Activated CD4-positive, alpha-beta memory T cell treated with anti-CD3 and anti-CD28 coated beads, Interleukin-2, amount 10 ng/mL, durations not matched to agents 7 days and 5 days (primary cell): ENCODE measurements at regions of chr18 and their contacts with region 1.

Region 1: GRCh38 chr18:51197661-51198424 is at the start of gene MEX3C:
- DNase-seq: peak; percentile 99
- H3K4me3 Mint-ChIP-seq: peak within 1 kb of the TSS; percentile 89
- H3K27ac Mint-ChIP-seq: peak within 1 kb of the TSS; percentile 97
- H3K4me1 Mint-ChIP-seq: peaks cover 26% of the 10 kb centered on the region
- H3K27me3 Mint-ChIP-seq: no peaks in the 10 kb centered on the region
- total RNA-seq, gene MEX3C: 55.4 to 62.6 TPM

Region 2: DNA sequence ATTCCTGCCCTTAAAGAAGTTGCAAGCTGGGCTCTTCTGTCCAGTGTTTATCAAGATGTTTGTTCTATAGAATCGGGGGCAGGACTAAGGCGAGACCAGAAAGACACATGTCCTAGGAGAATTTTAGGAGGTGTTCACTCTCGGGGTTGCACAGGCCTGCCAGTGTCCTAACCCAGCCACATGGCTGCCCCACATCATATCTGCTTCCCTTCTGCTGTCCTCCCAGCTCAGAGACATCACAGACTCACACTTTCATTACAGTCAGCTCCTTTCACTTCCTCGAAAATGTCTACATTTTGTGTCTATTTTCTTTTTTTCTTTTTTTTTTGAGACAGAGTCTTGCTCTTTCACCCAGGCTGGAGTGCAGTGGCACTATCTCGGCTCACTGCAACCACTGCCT is 367.3 kb before region 1 on chr18:
- CTCF ChIA-PET with region 1: no interaction called
- POLR2A ChIA-PET with region 1: no interaction called
- DNase-seq: no peak
- H3K4me3 Mint-ChIP-seq: no peak overlapping the region
- H3K27ac Mint-ChIP-seq: no peak overlapping the region
- H3K4me1 Mint-ChIP-seq: no peaks in the 10 kb centered on the region
- H3K27me3 Mint-ChIP-seq: peaks cover 3% of the 10 kb centered on the region

Region 3: DNA sequence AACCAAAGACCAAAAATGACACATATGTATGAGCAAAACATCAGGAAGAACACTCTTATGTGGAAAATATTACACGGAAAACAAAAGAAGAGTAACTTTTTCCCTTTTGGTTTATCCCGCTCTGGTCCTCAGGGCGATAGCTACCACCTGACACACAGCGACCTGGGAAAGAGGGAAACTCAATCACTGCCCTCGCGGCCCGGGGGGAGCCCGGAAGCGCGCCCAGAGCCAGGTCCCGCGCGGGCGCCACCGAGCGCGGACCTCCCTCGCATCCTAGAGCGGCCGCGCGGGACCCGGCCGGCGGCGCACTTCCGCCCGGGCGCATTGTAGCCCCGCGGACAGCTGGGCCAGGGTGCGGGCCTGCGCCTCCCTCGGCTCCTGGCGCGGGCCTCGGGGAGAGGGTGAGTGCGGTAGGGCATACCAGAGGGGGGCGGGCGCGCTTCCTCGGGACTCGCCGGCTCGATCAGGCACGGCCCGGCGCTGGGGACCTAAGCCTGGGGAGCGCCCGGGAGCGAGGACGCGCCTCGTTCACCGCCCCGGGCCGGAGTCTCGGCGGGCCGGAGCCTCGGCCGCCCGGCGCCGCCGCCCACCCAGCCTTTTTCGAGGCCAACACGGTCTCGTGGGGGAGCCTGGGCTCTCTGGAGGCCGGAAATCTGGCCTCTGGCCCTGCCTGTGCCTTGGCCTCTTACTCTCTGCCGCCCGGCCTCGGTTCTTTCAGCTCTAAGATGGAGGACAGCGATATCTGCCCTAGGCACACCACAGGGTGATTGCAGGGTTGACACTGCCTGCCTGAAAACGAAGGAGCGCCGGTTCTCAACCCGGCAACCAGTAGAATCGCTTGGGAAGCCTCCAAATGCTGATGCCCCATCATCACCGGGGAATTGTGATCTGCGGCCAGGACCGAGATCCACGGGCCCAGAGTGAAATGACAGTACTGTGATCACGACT is 229.9 kb before region 1 on chr18 and contains the start of gene ELAC1:
- CTCF ChIA-PET with region 1: no interaction called
- POLR2A ChIA-PET with region 1: interaction called, 14 read pairs
- DNase-seq: peak; percentile 67
- H3K4me3 Mint-ChIP-seq: peak within 1 kb of the TSS; percentile 97
- H3K27ac Mint-ChIP-seq: peak within 1 kb of the TSS; percentile 80
- H3K4me1 Mint-ChIP-seq: peaks cover 28% of the 10 kb centered on the region
- H3K27me3 Mint-ChIP-seq: no peaks in the 10 kb centered on the region
- total RNA-seq, gene ELAC1: 5.9 to 7.3 TPM

Region 4: DNA sequence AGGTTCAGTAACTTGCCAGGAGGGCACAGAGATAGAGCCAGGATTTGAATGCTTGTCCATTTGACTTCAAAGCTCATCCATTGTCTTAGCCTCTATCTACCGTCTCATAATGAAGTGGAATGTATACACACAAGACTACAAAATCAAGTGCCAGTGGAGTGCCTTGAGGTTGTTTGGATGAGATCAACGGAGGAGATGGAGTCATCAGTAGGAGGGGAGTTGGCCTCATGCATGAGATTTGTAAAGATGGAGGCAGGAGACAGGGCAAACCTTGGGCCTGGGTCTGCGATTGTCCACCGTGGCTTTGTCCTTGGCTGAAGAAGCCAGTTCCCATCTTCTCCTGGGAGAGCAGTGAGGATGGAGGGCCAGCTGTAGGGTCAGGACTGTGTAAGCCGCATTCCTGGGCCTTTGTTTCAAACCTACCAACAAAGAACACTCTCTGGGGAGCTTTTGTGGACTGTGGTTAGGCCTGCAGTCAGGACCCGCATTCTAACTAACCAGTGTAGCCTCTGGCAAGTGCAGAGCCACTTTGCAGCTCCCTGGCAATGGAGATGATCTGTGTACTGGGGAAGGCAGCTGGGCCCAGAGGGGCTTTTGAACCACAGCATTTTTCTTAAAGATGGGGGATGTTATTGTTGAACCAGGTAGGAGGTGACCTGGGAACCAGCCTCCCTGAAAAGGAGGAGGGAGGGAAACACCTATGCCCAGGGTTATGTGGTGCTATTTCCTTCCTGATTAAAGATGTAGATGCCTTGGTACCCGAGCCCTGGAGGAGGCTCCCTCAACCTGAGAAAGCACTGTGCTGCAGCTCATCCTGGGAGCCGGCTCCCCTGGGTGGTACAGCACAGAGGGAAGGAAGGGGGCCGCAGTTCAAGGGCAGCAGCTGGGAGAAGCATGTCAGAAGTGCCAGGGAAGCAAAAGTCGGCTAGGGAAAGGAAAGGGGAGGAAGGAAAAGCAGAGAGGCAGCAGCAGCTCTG is 180.7 kb before region 1 on chr18:
- CTCF ChIA-PET with region 1: no interaction called
- POLR2A ChIA-PET with region 1: no interaction called
- DNase-seq: no peak
- H3K4me3 Mint-ChIP-seq: no peak overlapping the region
- H3K27ac Mint-ChIP-seq: no peak overlapping the region
- H3K4me1 Mint-ChIP-seq: no peaks in the 10 kb centered on the region
- H3K27me3 Mint-ChIP-seq: no peaks in the 10 kb centered on the region

Region 5: GRCh38 chr18:51110073-51110803 is 87.6 kb before region 1 on chr18:
- CTCF ChIA-PET with region 1: interaction called, 4 read pairs
- POLR2A ChIA-PET with region 1: interaction called, 10 read pairs
- DNase-seq: peak; percentile 71
- H3K4me3 Mint-ChIP-seq: no peak overlapping the region
- H3K27ac Mint-ChIP-seq: no peak overlapping the region
- H3K4me1 Mint-ChIP-seq: peaks cover 22% of the 10 kb centered on the region
- H3K27me3 Mint-ChIP-seq: no peaks in the 10 kb centered on the region

Region 6: GRCh38 chr18:51128533-51128932 is 69.3 kb before region 1 on chr18:
- CTCF ChIA-PET with region 1: no interaction called
- POLR2A ChIA-PET with region 1: no interaction called
- DNase-seq: no peak
- H3K4me3 Mint-ChIP-seq: no peak overlapping the region
- H3K27ac Mint-ChIP-seq: no peak overlapping the region
- H3K4me1 Mint-ChIP-seq: no peaks in the 10 kb centered on the region
- H3K27me3 Mint-ChIP-seq: no peaks in the 10 kb centered on the region

Region 7: GRCh38 chr18:51164761-51165281 is 33.0 kb before region 1 on chr18:
- CTCF ChIA-PET with region 1: interaction called, 4 read pairs
- POLR2A ChIA-PET with region 1: interaction called, 70 read pairs
- DNase-seq: no peak
- H3K4me3 Mint-ChIP-seq: no peak overlapping the region
- H3K27ac Mint-ChIP-seq: peak overlapping the region; percentile 34
- H3K4me1 Mint-ChIP-seq: peaks cover 55% of the 10 kb centered on the region
- H3K27me3 Mint-ChIP-seq: no peaks in the 10 kb centered on the region

Region 8: GRCh38 chr18:51211552-51211951 is 13.7 kb after region 1 on chr18:
- CTCF ChIA-PET with region 1: interaction called, 7 read pairs
- POLR2A ChIA-PET with region 1: interaction called, 17 read pairs
- DNase-seq: peak; percentile 79
- H3K4me3 Mint-ChIP-seq: no peak overlapping the region
- H3K27ac Mint-ChIP-seq: peak overlapping the region; percentile 68
- H3K4me1 Mint-ChIP-seq: peaks cover 27% of the 10 kb centered on the region
- H3K27me3 Mint-ChIP-seq: no peaks in the 10 kb centered on the region